ENCODE measurements at regions of chr11 and their contacts with region 1.

Region 1: DNA sequence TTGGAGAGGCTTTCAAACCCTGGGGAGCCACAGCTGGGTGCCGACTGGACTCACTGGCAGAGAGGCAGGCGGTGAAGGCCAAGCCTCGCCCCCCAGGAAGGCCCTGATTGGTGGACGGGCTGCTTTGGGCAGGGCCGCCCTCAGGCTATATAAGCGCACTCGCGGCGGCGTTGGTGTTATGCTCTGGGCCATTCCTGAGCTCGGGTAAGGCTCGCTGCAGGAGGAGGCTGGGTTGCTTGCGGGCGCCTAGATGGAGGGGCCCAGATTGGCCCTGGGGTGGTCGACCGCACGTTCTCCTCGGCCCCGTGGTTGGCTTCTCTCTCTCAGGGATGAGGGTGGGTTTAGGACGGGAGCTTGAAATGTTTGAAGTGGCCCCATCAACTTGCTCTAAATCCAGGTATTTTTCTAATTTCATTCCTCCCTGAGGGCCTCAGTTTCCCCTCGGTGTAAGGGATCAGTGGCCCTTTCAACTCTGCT is at the start of gene SPDYC:
- DNase-seq: no peak
- ATAC-seq: peak in 1 of 4 donors; percentile 31
- H3K4me3 ChIP-seq: no peak within 1 kb of the TSS
- H3K27ac ChIP-seq: no peak within 1 kb of the TSS
- H3K4me1 ChIP-seq: peaks cover 0 to 7% (median 0%) of the 10 kb centered on the region in 12 donors
- H3K27me3 ChIP-seq: no peaks in the 10 kb centered on the region
- CTCF ChIP-seq: no peak
- POLR2A ChIP-seq: no peak
- total RNA-seq, gene SPDYC: not detected

Region 2: DNA sequence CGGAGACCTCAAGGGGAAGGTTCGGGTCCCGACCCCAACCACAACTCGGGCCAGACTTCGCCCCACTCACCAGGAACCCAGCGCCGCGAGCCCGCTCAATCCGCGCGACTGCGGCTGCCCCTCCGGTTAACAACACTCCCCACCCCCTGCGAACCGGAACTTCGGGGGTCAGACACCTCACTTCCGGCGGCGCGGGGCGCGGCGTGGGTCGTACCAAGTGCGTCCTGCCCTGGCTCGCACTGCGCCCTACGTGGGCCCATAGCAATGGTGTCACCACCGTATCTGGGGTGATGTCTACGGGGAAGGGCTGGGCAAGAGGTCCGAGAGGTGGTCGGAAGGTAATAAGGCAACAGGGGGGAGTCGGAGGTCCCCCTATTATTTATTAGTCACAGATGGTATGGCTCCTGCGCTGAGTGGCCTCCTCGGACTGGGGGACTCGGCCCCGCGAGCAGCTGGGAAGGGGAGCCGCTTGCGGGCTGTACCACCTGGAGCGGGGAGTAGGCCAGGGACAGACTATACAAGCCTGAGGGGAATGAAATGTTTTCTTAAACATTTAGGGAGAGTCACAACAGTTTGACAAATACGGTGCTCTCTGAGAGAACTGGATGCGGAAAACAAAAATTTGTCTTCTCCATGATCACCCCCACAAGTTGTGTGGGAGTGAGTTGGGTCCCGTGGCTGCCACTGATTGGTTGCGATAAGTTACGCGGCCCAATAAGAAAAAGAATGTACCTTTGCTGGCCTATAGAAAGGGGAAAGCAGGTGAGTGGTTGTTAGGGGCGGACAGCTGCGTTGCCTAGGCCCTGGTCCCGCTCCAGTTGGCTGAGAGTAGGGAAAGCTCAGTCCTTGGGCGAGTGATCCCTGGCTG is 35.5 kb before region 1 on chr11 and contains the start of gene SYVN1:
- intact Hi-C with region 1: loop called in 1 of 10 experiments (anchors 5 kb)
- DNase-seq: peak; percentile 91 to 95 (median 93)
- ATAC-seq: peak; percentile 90 to 95 (median 92)
- H3K4me3 ChIP-seq: peak within 1 kb of the TSS; percentile 63 to 98 (median 89)
- H3K27ac ChIP-seq: peak within 1 kb of the TSS; percentile 94 to 99 (median 98)
- H3K4me1 ChIP-seq: peaks cover 0 to 34% (median 26%) of the 10 kb centered on the region in 12 donors
- H3K27me3 ChIP-seq: no peaks in the 10 kb centered on the region
- CTCF ChIP-seq: no peak
- POLR2A ChIP-seq: peak; percentile 57 to 85
- total RNA-seq, gene SYVN1: 21.7 to 65.8 (median 28.2) TPM